Transverse colon (tissue), 4 donors: ENCODE measurements at regions of chr10 and their contacts with region 1.

Region 1: DNA sequence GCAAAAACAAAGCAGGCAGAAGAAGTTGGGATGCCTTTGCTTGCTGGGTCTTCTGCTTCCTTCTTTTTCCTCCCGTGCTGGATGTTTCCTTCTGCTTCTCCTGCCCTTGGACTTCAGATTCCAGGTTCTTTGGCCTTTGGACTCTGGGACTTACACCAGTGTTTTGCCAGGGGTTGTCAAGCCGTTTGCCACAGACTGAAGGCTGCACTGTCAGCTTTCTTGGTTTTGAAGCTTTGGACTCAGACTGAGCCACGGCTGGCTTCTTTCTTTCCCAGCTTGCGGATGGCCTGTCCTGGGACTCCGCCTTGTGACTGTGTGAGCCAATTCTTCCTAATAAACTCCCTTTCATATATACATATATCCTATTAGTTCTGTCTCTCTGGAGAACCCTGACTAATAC is 11.3 kb upstream of the LCOR start:
- DNase-seq: no peak
- H3K4me3 ChIP-seq: no peak overlapping the region
- H3K27ac ChIP-seq: no peak overlapping the region
- H3K4me1 ChIP-seq: no peaks in the 10 kb centered on the region
- H3K27me3 ChIP-seq: no peaks in the 10 kb centered on the region
- CTCF ChIP-seq: no peak
- EP300 ChIP-seq: no peak
- POLR2A ChIP-seq: no peak

Region 2: DNA sequence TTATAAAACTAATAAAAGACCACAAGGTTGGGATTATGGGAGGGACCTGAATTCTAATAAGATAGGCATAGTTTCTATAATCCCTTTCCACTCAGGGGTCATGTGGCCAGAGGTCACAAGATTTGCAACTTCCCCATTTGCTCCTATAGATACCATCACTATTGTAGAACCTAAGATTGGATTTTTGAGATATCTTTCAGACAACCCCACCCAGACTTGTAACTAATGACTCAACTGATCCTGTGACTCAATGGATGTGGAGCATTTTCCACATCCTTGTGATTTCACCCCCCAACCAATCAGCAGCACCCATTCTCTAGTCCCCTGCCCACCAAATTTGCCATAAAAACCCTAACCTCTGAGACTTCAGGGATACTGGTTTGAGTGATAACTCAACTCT is 48.6 kb before region 1 on chr10:
- in situ Hi-C with region 1: loop called in 2 of 4 experiments (anchors 5 to 10 kb)
- intact Hi-C with region 1: no loop called
- DNase-seq: no peak
- H3K4me3 ChIP-seq: no peak overlapping the region
- H3K27ac ChIP-seq: no peak overlapping the region
- H3K4me1 ChIP-seq: peaks cover 0 to 3% (median 0%) of the 10 kb centered on the region in 4 donors
- H3K27me3 ChIP-seq: no peaks in the 10 kb centered on the region
- CTCF ChIP-seq: no peak
- EP300 ChIP-seq: no peak
- POLR2A ChIP-seq: no peak

Region 3: GRCh38 chr10:97149079-97149531 is 328.3 kb after region 1 on chr10:
- in situ Hi-C with region 1: no loop called
- intact Hi-C with region 1: no loop called
- DNase-seq: no peak
- H3K4me3 ChIP-seq: no peak overlapping the region
- H3K27ac ChIP-seq: no peak overlapping the region
- H3K4me1 ChIP-seq: no peaks in the 10 kb centered on the region
- H3K27me3 ChIP-seq: peaks cover 2% of the 10 kb centered on the region
- CTCF ChIP-seq: no peak
- EP300 ChIP-seq: no peak
- POLR2A ChIP-seq: no peak

Region 4: GRCh38 chr10:97612386-97612785 is 791.6 kb after region 1 on chr10:
- in situ Hi-C with region 1: no loop called
- intact Hi-C with region 1: no loop called
- DNase-seq: no peak
- H3K4me3 ChIP-seq: no peak overlapping the region
- H3K27ac ChIP-seq: no peak overlapping the region
- H3K4me1 ChIP-seq: no peaks in the 10 kb centered on the region
- H3K27me3 ChIP-seq: no peaks in the 10 kb centered on the region
- CTCF ChIP-seq: peak in 4 of 5 experiments; percentile 20 to 32 (median 28)
- EP300 ChIP-seq: no peak
- POLR2A ChIP-seq: no peak